Ascending aorta (tissue), 2 donors: ENCODE measurements at regions of chr1 and their contacts with region 1.

Region 1: DNA sequence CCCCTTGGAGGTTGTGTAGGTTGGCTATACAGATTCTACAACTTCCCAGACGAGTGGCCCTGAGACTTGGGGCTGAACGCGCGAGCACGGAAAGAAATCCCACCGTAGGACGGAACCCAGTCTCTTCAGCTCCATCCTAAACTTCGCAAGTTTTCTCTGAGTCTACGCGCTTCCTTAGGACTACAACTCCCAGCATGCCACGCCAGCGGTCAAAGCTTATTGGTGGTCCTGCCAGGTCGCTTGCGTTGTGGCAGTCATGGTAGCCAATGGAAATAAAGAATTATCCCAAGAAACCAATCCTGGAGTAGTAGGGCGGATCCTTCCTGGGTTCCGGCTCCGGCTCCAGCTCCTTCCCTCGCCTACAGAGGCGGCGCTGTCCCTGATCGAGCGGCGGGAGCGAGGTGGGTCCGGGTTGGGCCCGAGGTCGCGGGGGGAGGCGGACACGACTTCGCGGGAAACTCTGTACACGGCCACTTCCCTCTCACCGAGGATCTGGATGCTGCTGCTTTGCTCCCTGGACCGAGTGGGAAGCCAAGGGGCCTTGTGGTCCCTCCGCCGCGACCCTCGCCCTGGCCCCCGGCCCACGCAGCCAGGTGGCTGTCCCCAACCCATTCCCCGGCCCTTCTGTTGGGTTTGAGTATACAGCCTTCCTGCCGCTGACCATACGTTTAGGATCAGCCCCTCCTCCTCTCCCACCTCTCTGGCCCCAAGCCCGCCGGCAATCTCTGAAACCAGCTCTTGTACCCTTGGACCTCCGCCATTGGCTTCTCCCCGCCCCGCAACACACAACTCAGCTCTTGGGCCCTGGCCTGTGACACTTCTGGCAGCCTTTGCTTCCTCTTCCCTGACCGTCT is at the start of gene ZNF691:
- DNase-seq: peak; percentile 87 to 97
- H3K4me3 ChIP-seq: peak within 1 kb of the TSS; percentile 81 to 82
- H3K27ac ChIP-seq: peak within 1 kb of the TSS; percentile 58 to 82
- H3K4me1 ChIP-seq: peaks cover 0 to 14% of the 10 kb centered on the region in 2 donors
- H3K27me3 ChIP-seq: no peaks in the 10 kb centered on the region
- CTCF ChIP-seq: peak; percentile 15 to 62 (median 54)
- total RNA-seq, gene ZNF691: 14.7 TPM

Region 2: GRCh38 chr1:42657971-42658879 is 188.3 kb before region 1 on chr1 and contains the start of gene PPIH:
- intact Hi-C with region 1: loop called (anchors 2 kb)
- DNase-seq: peak; percentile 76 to 97
- H3K4me3 ChIP-seq: peak within 1 kb of the TSS; percentile 65 to 72
- H3K27ac ChIP-seq: peak within 1 kb of the TSS; percentile 67 to 78
- H3K4me1 ChIP-seq: peaks cover 3 to 14% of the 10 kb centered on the region in 2 donors
- H3K27me3 ChIP-seq: no peaks in the 10 kb centered on the region
- CTCF ChIP-seq: peak in 2 of 3 experiments; percentile 37 to 40
- total RNA-seq, gene PPIH: 2.2 TPM

Region 3: GRCh38 chr1:42766741-42767509 is 79.6 kb before region 1 on chr1 and contains the starts of genes C1orf50 and P3H1:
- intact Hi-C with region 1: loop called (anchors 1 kb)
- DNase-seq: peak; percentile 99 to 100
- H3K4me3 ChIP-seq: peak within 1 kb of the TSS; percentile 86 to 88
- H3K27ac ChIP-seq: peak within 1 kb of the TSS; percentile 84 to 91
- H3K4me1 ChIP-seq: peaks cover 0 to 19% of the 10 kb centered on the region in 2 donors
- H3K27me3 ChIP-seq: no peaks in the 10 kb centered on the region
- CTCF ChIP-seq: no peak
- total RNA-seq, gene C1orf50: 0.64 TPM
- total RNA-seq, gene P3H1: 72.2 TPM

Region 4: GRCh38 chr1:42958488-42959319 is 112.2 kb after region 1 on chr1 and contains the start of gene SLC2A1:
- intact Hi-C with region 1: loop called (anchors 5 kb)
- DNase-seq: peak; percentile 88 to 97
- H3K4me3 ChIP-seq: peak within 1 kb of the TSS; percentile 94 to 96
- H3K27ac ChIP-seq: peak within 1 kb of the TSS; percentile 93 to 97
- H3K4me1 ChIP-seq: peaks cover 13 to 34% of the 10 kb centered on the region in 2 donors
- H3K27me3 ChIP-seq: no peaks in the 10 kb centered on the region
- CTCF ChIP-seq: peak in 1 of 3 experiments; percentile 3
- total RNA-seq, gene SLC2A1: 15.5 TPM

Region 5: DNA sequence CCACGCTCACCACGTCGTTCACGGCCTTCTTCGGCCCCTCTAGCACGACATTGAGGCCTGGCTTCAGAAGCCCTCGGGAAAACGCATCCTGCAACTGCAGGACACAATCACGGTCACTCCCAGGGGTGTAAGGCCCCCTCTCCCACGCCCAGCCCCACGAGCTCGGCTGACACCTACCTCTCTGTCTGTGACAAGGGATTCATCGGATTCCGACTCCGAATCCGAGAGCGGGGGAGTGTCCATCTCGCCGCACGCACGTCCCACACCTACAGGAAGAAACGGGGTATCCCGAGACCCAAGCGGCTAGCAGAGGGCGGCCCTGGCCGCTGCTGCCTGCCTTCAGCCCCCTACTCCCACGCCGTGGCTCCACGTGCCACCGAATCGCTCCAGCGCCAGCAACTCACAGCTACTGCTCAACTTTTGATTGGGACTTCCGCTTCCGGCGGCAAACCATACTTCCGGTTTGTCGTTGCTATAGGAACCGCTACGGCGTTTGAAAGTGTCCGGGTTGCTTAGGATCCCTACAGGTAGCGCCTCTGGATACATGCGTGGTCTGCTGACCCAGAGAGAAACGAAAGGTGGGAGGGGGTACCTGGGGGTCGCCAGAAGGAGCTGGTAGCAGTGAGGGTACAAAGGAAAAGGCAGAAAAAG is 325.5 kb after region 1 on chr1 and contains the starts of genes CFAP57 and EBNA1BP2:
- intact Hi-C with region 1: loop called (anchors 1 kb)
- DNase-seq: peak; percentile 76 to 96
- H3K4me3 ChIP-seq: peak within 1 kb of the TSS; percentile 69 to 92
- H3K27ac ChIP-seq: peak within 1 kb of the TSS; percentile 46 to 51
- H3K4me1 ChIP-seq: peaks cover 6 to 9% of the 10 kb centered on the region in 2 donors
- H3K27me3 ChIP-seq: no peaks in the 10 kb centered on the region
- CTCF ChIP-seq: no peak
- total RNA-seq, gene CFAP57: not detected
- total RNA-seq, gene EBNA1BP2: 22.1 TPM